Activated T-helper 1 cell treated with anti-CD3 and anti-CD28 coated beads, Interleukin-12 subunit alpha, Interleukin-12 subunit beta, Interleukin-2, Interleukin-4 antibody, amounts not matched to agents 30 ng/mL and 10 ng/mL and 1 ng/mL, durations not matched to agents 14 hours and 24 hours and 36 hours (primary cell): ENCODE measurements at regions of chr15 and their contacts with region 1.

Region 1: GRCh38 chr15:50066192-50066591 is 52.8 kb downstream of the ATP8B4 start:
- DNase-seq: peak; percentile 44
- H3K4me3 Mint-ChIP-seq: peak overlapping the region; percentile 45
- H3K27ac Mint-ChIP-seq: peak overlapping the region; percentile 92
- H3K4me1 Mint-ChIP-seq: peaks cover 62% of the 10 kb centered on the region
- H3K27me3 Mint-ChIP-seq: no peaks in the 10 kb centered on the region

Region 2: DNA sequence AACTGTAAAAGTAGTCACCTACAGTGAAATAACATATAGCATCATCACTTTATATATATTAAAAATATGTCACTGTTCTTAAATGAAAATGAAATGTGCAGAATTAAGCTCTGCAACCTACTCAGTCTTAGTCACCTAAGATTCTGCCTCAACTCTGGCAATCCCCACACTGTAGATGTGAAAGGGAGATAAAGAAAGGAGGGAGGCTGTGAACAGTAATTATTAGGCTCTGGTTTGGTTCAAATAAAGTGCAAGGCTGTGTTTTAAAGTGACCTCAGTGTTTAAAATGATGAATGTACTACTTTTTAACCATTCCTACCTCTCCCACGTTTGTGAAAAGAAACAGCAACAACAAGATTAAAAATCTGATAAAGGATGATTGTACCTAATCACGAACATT is 19.3 kb before region 1 on chr15:
- intact Hi-C with region 1: loop called (anchors 1 kb)
- DNase-seq: no peak
- H3K4me3 Mint-ChIP-seq: no peak overlapping the region
- H3K27ac Mint-ChIP-seq: peak overlapping the region; percentile 94
- H3K4me1 Mint-ChIP-seq: peaks cover 42% of the 10 kb centered on the region
- H3K27me3 Mint-ChIP-seq: no peaks in the 10 kb centered on the region

Region 3: DNA sequence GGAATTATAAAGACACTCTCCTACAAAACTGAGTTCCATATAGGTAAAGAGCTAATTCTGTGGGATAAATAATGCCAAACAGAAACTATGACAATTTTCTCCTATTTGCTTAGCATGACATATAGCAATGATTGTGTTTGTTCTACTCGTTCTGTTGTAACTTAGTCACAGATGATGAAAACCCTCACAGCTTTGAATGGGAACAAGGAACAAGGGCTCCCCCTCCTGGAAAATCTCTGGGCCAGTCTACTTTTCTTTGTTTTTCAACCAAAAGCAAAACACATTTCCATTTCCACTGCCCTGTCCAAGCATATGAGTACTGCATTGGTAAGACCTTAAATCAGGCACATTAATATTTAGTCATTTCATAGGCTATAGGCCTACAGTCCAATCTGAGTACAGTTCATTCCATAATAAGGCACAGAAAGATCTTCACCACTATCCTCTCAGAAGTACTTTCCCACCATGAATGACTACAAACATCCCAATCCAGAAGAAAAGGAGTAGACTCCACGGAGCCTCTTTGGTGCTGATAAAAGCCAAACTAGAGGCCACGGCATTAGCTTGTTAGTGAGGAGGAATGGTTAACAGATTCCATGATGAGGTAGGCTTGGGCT is 14.3 kb before region 1 on chr15:
- intact Hi-C with region 1: loop called (anchors 1 kb)
- DNase-seq: peak; percentile 29
- H3K4me3 Mint-ChIP-seq: no peak overlapping the region
- H3K27ac Mint-ChIP-seq: peak overlapping the region; percentile 44
- H3K4me1 Mint-ChIP-seq: peaks cover 49% of the 10 kb centered on the region
- H3K27me3 Mint-ChIP-seq: no peaks in the 10 kb centered on the region

Region 4: GRCh38 chr15:50083424-50084025 is 17.3 kb after region 1 on chr15:
- intact Hi-C with region 1: loop called (anchors 2 kb)
- DNase-seq: no peak
- H3K4me3 Mint-ChIP-seq: no peak overlapping the region
- H3K27ac Mint-ChIP-seq: peak overlapping the region; percentile 21
- H3K4me1 Mint-ChIP-seq: peaks cover 40% of the 10 kb centered on the region
- H3K27me3 Mint-ChIP-seq: no peaks in the 10 kb centered on the region

Region 5: DNA sequence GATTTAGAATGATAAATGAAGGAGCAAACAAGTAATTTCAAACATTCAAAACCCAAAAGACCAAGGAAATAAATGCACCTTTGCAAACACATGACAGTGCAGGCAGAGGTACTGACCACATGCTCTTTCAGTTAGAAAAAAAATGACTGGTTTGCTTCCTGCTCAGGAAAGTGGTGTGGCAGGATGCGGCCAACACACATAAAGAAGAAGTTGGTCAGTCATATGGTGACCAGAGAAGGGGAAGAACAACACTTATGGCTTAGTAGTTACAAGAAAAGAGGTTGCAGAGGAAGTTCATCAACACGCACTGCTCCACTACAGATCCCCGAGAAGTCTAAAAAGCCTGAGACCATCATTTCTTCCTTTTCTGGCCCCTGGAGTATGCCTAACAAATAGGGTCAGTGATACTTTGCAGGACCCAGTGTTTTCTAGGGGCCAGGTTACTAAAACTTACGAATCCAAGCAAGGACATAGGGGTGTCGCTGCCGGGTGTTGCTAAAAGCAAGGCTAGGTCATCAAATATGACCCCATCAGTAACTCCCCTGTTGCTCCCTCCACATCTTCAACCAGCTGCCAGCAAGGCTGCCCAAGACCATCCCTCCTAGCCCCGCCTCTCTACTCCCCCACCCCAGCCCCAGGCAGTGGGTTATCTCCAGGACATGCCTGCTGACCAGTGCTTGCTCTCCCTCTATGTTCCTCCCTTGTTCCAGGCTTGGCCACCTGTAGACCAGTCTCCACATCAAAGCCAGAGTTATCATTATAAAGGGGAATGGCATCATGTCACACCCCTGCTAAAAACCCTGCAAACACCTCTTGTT is 41.6 kb after region 1 on chr15:
- intact Hi-C with region 1: loop called (anchors 1 kb)
- DNase-seq: peak; percentile 44
- H3K4me3 Mint-ChIP-seq: peak overlapping the region; percentile 75
- H3K27ac Mint-ChIP-seq: peak overlapping the region; percentile 93
- H3K4me1 Mint-ChIP-seq: peaks cover 93% of the 10 kb centered on the region
- H3K27me3 Mint-ChIP-seq: no peaks in the 10 kb centered on the region

Region 6: DNA sequence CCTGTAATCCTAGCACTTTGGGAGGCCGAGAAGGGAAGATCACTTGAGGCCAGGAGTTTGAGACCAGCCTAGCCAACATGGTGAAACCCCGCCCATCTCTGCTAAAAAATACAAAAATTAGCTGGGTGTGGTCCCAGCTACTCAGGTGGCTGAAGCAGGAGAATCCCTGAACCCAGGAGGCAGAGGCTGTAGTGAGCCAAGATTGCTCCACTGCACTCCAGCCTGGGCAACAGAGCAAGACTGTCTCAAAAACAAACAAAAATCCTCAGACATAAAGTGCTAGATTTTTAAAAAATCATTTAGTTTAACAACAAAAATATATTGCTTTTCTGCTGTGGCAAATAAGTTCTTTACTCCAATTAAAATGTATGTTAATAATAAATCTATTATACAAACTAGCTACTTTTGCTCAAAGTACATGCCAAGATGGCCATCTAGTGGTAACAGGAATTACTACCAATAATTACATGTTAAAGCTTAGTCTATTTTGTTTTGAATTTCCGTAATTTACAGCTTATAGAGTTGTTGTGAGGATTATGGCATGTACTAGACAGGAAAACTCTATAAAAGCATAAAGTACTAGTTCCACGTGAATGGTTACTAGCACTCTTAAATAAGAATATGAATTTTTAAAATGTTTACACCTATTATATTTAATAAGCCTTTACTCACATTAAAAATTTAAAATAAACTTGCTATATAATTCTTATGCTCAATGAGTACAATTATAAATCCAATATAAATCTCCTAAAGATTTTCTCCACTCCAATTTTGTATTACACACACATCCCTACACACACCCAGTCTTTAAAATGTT is 249.8 kb after region 1 on chr15:
- intact Hi-C with region 1: loop called (anchors 5 kb)
- DNase-seq: no peak
- H3K4me3 Mint-ChIP-seq: no peak overlapping the region
- H3K27ac Mint-ChIP-seq: no peak overlapping the region
- H3K4me1 Mint-ChIP-seq: peaks cover 44% of the 10 kb centered on the region
- H3K27me3 Mint-ChIP-seq: no peaks in the 10 kb centered on the region